B cell (primary cell): ENCODE measurements at regions of chr2 and their contacts with region 1.

Region 1: DNA sequence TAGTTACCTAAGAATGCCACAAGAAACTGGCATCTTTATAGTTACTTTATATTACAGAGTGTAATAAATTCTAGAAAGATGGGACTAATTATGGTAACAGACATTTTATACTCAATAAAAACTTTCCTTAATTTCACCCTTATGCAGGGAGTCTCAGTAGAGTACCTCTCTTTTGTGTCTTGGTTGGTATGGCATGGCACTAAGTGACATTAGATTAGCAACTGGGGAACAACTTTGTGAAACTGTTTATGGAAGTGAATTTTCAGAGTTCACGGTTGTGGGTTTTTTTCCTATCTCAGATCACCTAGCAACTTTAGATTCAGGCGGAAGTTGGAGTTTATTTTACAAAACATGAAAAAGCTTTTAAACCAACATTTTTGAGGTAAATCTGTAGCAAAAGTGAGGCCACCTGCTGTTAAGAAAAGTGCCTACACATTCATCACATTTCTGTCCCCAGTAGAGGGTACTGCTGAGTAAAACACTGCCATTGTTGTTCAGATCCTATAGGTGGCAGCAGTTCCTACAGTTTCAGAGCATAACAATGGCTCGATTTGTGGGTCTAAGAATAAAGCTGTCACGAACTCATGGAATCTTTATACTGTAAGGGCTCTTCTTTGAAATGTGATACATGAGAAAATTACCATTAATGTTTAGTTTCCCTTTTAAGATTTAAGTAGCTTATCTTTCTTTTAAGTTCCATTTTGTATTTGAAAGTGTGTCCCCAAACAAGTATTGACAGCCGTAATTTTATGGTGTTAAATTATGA is 117.6 kb downstream of the CAMKMT start:
- DNase-seq: peak; percentile 81
- ATAC-seq: peak; percentile 100
- H3K4me3 ChIP-seq: no peak overlapping the region
- H3K4me3 Mint-ChIP-seq: no peak overlapping the region
- H3K27ac ChIP-seq: no peak overlapping the region
- H3K27ac Mint-ChIP-seq: no peak overlapping the region
- H3K4me1 ChIP-seq: no peaks in the 10 kb centered on the region
- H3K4me1 Mint-ChIP-seq: peaks cover 4% of the 10 kb centered on the region
- H3K27me3 ChIP-seq: no peaks in the 10 kb centered on the region
- H3K27me3 Mint-ChIP-seq: no peaks in the 10 kb centered on the region
- CTCF ChIP-seq: peak; percentile 100

Region 2: DNA sequence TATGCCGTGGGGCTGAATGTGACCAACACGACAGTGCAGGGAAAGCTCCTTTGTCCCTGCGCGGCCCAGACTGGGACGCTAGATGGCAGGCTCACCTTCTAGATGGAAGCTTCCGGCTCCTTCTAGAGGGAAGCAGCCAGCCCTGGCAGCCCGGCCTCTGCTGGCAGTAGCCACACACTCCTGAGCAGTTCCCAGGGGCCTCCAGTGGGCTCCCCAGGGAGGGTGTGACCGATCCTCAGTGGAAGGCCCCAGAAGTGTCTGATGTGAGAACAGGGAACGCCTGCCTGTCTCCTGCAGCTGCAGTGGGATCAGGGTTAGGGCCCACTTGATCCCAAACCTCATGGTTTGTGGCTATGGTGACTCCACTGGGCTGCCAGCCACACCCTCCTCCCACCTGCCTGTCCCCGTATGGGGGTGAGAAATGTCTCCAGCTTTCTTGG is 435.0 kb before region 1 on chr2:
- CTCF ChIA-PET with region 1: interaction called, 15 read pairs
- POLR2A ChIA-PET with region 1: no interaction called
- intact Hi-C with region 1: loop called (anchors 1 kb)
- DNase-seq: peak; percentile 80
- ATAC-seq: peak; percentile 98
- H3K4me3 ChIP-seq: no peak overlapping the region
- H3K4me3 Mint-ChIP-seq: no peak overlapping the region
- H3K27ac ChIP-seq: no peak overlapping the region
- H3K27ac Mint-ChIP-seq: no peak overlapping the region
- H3K4me1 ChIP-seq: peaks cover 0 to 6% of the 10 kb centered on the region in 2 donors
- H3K4me1 Mint-ChIP-seq: peaks cover 7% of the 10 kb centered on the region
- H3K27me3 ChIP-seq: no peaks in the 10 kb centered on the region
- H3K27me3 Mint-ChIP-seq: peaks cover 3% of the 10 kb centered on the region
- CTCF ChIP-seq: peak; percentile 84

Region 3: DNA sequence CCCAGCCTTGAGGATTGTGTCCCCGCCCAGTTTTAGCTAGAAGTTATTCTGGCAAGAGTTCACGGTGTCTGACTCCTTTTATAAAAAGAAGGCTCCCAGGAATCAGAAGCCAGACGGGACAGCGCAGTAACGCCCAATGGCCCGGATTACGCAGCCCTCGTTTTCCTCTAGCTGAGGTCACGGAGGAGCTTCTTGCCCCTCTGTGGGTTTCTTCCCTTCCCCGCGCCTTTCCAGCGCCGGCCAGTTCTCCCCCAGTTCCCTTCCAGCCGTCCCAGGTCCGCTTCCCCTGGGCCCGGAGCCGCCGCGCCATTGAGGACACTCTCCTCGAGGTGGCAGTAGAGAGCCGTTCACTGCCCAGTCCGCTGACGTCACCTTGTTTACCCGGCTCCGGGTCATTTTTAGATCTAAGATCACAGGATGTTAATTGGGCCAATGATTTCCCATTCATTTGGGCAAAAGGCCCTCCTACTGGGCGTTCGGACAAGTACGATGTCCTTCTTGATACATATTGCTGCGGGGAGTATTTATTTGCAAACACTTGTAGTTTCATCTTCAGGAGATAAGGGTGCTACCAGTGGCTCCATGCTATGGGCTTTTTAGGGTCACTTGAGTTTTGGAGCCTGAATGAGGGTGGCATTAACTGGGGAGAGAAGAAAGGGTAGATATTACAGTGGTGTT is 392.1 kb before region 1 on chr2:
- CTCF ChIA-PET with region 1: interaction called, 5 read pairs
- POLR2A ChIA-PET with region 1: no interaction called
- intact Hi-C with region 1: loop called (anchors 1 kb)
- DNase-seq: peak; percentile 87
- ATAC-seq: peak; percentile 97
- H3K4me3 ChIP-seq: peak overlapping the region; percentile 43 to 70 (median 57)
- H3K4me3 Mint-ChIP-seq: peak overlapping the region; percentile 66
- H3K27ac ChIP-seq: peak overlapping the region; percentile 44 to 71
- H3K27ac Mint-ChIP-seq: peak overlapping the region; percentile 54
- H3K4me1 ChIP-seq: peaks cover 24 to 32% of the 10 kb centered on the region in 2 donors
- H3K4me1 Mint-ChIP-seq: peaks cover 23% of the 10 kb centered on the region
- H3K27me3 ChIP-seq: no peaks in the 10 kb centered on the region
- H3K27me3 Mint-ChIP-seq: no peaks in the 10 kb centered on the region
- CTCF ChIP-seq: peak; percentile 97

Region 4: GRCh38 chr2:44462934-44463849 is 16.1 kb before region 1 on chr2:
- CTCF ChIA-PET with region 1: interaction called, 20 read pairs
- POLR2A ChIA-PET with region 1: no interaction called
- intact Hi-C with region 1: no loop called
- DNase-seq: no peak
- ATAC-seq: no peak
- H3K4me3 ChIP-seq: no peak overlapping the region
- H3K4me3 Mint-ChIP-seq: no peak overlapping the region
- H3K27ac ChIP-seq: no peak overlapping the region
- H3K27ac Mint-ChIP-seq: no peak overlapping the region
- H3K4me1 ChIP-seq: no peaks in the 10 kb centered on the region
- H3K4me1 Mint-ChIP-seq: no peaks in the 10 kb centered on the region
- H3K27me3 ChIP-seq: no peaks in the 10 kb centered on the region
- H3K27me3 Mint-ChIP-seq: no peaks in the 10 kb centered on the region
- CTCF ChIP-seq: no peak

Region 5: DNA sequence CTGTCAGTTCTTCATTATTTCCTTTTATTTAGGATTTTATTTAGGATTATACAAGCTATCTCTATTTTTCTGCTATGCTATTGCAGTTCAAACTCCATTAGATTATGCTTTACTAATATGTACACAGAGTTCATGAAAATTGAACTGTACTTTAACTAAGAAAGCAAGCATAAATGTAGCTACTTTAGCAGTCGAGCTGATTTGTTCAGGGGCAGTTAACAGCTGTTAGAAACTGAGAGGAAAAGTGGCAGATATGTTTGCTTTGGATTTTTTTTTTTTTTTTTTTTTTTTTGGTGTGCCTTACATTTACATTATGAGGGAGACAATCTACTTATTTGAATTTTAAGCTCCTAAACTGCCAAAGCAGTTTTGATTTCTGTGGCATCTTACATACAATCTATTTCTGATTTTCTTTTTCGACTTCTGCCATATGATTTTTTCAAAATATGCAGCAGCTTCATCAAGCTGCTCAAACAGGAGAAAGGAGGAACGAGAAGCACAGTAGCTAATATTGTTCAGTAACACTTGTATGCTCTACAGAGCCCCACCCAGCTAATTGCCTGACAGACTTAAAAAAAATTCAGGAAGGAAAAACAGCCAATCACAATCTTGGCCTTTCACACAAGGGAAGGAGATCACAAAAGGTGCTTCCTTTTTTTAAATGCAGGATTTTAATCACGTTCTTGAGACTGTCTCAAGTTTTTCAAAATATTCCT is 228.8 kb after region 1 on chr2:
- CTCF ChIA-PET with region 1: interaction called, 15 read pairs
- POLR2A ChIA-PET with region 1: no interaction called
- intact Hi-C with region 1: no loop called
- DNase-seq: peak; percentile 84
- ATAC-seq: peak; percentile 79
- H3K4me3 ChIP-seq: peak overlapping the region; percentile 32 to 71 (median 58)
- H3K4me3 Mint-ChIP-seq: peak overlapping the region; percentile 85
- H3K27ac ChIP-seq: peak overlapping the region; percentile 78 to 80
- H3K27ac Mint-ChIP-seq: peak overlapping the region; percentile 91
- H3K4me1 ChIP-seq: peaks cover 37 to 47% of the 10 kb centered on the region in 2 donors
- H3K4me1 Mint-ChIP-seq: peaks cover 54% of the 10 kb centered on the region
- H3K27me3 ChIP-seq: no peaks in the 10 kb centered on the region
- H3K27me3 Mint-ChIP-seq: no peaks in the 10 kb centered on the region
- CTCF ChIP-seq: no peak

Region 6: DNA sequence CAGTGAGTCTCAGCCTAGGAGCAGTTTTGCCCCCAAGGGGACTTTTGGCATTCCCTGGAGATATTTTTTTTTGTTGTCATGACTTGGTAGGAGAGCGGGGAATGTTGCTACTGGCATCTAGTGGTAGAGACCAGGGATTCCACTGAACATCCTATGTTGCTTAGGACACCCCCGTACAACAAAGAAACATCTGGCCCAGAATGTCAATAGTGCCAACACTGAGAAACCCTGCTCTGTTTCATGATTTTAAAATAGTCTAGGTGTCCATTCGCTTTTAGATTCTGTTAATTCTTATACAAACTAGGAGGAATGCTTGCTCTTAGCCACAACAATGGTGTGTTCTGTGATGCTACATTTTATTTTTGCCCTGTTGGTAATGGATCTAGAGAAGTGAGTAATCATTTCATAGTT is 236.4 kb after region 1 on chr2:
- CTCF ChIA-PET with region 1: interaction called, 9 read pairs
- POLR2A ChIA-PET with region 1: no interaction called
- intact Hi-C with region 1: loop called (anchors 5 kb)
- DNase-seq: peak; percentile 15
- ATAC-seq: no peak
- H3K4me3 ChIP-seq: no peak overlapping the region
- H3K4me3 Mint-ChIP-seq: no peak overlapping the region
- H3K27ac ChIP-seq: peak overlapping the region in 1 of 2 donors; percentile 80
- H3K27ac Mint-ChIP-seq: peak overlapping the region; percentile 61
- H3K4me1 ChIP-seq: peaks cover 35 to 45% of the 10 kb centered on the region in 2 donors
- H3K4me1 Mint-ChIP-seq: peaks cover 43% of the 10 kb centered on the region
- H3K27me3 ChIP-seq: no peaks in the 10 kb centered on the region
- H3K27me3 Mint-ChIP-seq: no peaks in the 10 kb centered on the region
- CTCF ChIP-seq: no peak

Region 7: DNA sequence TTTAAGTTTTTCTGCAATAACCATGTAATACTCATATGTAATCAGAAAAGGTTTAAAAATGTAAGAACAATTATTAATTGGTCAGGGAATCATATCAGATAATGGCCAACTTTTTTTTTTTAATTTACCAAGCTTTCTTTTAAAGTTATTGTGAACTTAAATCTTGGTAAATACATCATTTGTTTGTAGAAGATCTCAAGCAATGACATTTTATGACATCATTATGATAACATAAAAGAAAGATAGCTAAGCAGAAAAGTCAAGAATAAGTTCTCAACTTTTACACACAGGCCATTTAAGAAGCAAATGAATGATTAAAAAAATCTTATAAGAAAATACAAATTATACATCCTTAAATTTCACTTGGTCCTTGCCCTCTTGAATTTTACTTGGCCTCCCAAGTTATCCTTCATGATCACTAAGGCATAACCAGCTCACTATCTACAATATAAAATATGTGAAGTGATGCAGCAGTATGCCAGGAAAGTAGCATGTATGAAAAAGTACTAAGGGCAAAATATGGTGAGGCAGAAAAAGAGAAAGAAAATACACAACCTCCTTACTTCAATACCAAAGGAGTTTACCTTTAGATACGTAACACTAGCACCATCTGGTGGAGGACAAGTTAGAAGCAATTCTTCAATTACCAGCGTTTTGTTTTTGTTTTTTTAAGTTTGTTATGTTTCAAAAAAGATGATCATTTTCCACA is 1015.1 kb after region 1 on chr2:
- CTCF ChIA-PET with region 1: interaction called, 4 read pairs
- POLR2A ChIA-PET with region 1: no interaction called
- intact Hi-C with region 1: loop called (anchors 2 kb)
- DNase-seq: peak; percentile 58
- ATAC-seq: no peak
- H3K4me3 ChIP-seq: no peak overlapping the region
- H3K4me3 Mint-ChIP-seq: no peak overlapping the region
- H3K27ac ChIP-seq: no peak overlapping the region
- H3K27ac Mint-ChIP-seq: no peak overlapping the region
- H3K4me1 ChIP-seq: no peaks in the 10 kb centered on the region
- H3K4me1 Mint-ChIP-seq: peaks cover 12% of the 10 kb centered on the region
- H3K27me3 ChIP-seq: no peaks in the 10 kb centered on the region
- H3K27me3 Mint-ChIP-seq: no peaks in the 10 kb centered on the region
- CTCF ChIP-seq: peak; percentile 86